ENCODE measurements at regions of chr18 and their contacts with region 1.

Region 1: GRCh38 chr18:55415258-55415871 is 172.6 kb downstream of the TCF4 start:
- DNase-seq: peak; percentile 80
- H3K4me3 Mint-ChIP-seq: no peak overlapping the region
- H3K27ac Mint-ChIP-seq: no peak overlapping the region
- H3K4me1 Mint-ChIP-seq: peaks cover 5% of the 10 kb centered on the region
- H3K27me3 Mint-ChIP-seq: no peaks in the 10 kb centered on the region
- CTCF ChIP-seq: peak; percentile 91

Region 2: DNA sequence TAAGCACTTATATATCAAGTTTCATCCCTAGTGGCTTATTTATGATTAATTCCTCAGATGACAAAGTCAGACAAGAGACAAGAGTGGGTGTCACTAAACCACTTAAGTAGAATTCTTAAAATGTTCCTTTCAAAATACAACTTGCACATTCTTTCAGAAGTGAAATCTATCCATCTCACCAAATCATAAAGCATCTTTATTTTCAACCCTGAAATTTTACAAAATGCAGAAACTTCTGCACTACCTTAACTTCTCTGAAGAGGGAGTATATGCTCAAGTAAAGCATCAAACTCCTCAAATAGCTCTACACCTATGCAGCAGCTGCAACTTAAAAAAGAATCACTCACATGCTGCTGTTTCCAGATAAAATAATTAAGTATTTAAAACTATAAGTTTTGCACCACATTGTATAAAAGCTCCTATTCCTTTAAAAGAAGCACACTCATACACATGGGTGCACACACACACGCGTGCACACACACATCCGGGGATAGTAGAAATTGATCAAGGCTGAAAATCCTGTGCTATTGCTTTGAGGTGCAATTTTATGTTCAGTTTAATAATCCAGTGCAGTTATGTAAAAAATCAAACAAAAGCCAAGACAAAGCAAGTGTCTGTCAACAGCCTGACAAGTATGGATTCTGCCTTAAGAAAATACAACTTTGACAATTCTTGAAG is 71.8 kb before region 1 on chr18:
- CTCF ChIA-PET with region 1: interaction called, 3 read pairs
- POLR2A ChIA-PET with region 1: no interaction called
- intact Hi-C with region 1: loop called (anchors 5 kb)
- DNase-seq: peak; percentile 25
- H3K4me3 Mint-ChIP-seq: no peak overlapping the region
- H3K27ac Mint-ChIP-seq: no peak overlapping the region
- H3K4me1 Mint-ChIP-seq: no peaks in the 10 kb centered on the region
- H3K27me3 Mint-ChIP-seq: no peaks in the 10 kb centered on the region
- CTCF ChIP-seq: peak; percentile 57

Region 3: GRCh38 chr18:55425698-55426097 is 10.3 kb after region 1 on chr18:
- CTCF ChIA-PET with region 1: interaction called, 12 read pairs
- POLR2A ChIA-PET with region 1: interaction called, 3 read pairs
- intact Hi-C with region 1: no loop called
- DNase-seq: no peak
- H3K4me3 Mint-ChIP-seq: no peak overlapping the region
- H3K27ac Mint-ChIP-seq: no peak overlapping the region
- H3K4me1 Mint-ChIP-seq: no peaks in the 10 kb centered on the region
- H3K27me3 Mint-ChIP-seq: no peaks in the 10 kb centered on the region
- CTCF ChIP-seq: no peak

Region 4: GRCh38 chr18:55489034-55489986 is 73.9 kb after region 1 on chr18:
- CTCF ChIA-PET with region 1: no interaction called
- POLR2A ChIA-PET with region 1: no interaction called
- intact Hi-C with region 1: no loop called
- DNase-seq: no peak
- H3K4me3 Mint-ChIP-seq: no peak overlapping the region
- H3K27ac Mint-ChIP-seq: no peak overlapping the region
- H3K4me1 Mint-ChIP-seq: peaks cover 6% of the 10 kb centered on the region
- H3K27me3 Mint-ChIP-seq: no peaks in the 10 kb centered on the region
- CTCF ChIP-seq: no peak

Region 5: GRCh38 chr18:55589625-55590291 is 174.4 kb after region 1 on chr18:
- CTCF ChIA-PET with region 1: no interaction called
- POLR2A ChIA-PET with region 1: interaction called, 3 read pairs
- intact Hi-C with region 1: loop called (anchors 2 kb)
- DNase-seq: peak; percentile 94
- H3K4me3 Mint-ChIP-seq: peak overlapping the region; percentile 88
- H3K27ac Mint-ChIP-seq: peak overlapping the region; percentile 96
- H3K4me1 Mint-ChIP-seq: peaks cover 17% of the 10 kb centered on the region
- H3K27me3 Mint-ChIP-seq: no peaks in the 10 kb centered on the region
- CTCF ChIP-seq: no peak

Region 6: DNA sequence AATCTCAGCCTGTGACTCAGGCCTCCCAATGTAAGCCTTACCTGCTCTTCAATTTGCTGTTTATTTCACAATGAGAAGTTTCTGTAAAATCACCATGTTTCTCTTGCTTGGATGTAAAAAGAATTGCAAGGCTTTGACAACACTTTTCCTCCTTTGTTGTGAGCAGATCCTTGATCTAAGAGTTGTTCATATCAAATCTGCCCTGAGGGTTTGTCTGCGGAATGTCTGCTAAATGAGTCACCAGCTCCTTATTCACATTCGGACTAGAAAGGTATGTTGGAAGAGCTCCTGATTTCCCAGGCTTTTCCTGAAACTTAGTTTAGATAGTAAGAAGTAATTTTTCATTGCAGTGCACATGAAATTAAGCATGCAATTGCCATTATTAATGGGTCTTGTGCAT is 440.9 kb after region 1 on chr18:
- CTCF ChIA-PET with region 1: interaction called, 14 read pairs
- POLR2A ChIA-PET with region 1: no interaction called
- intact Hi-C with region 1: loop called (anchors 1 kb)
- DNase-seq: peak; percentile 97
- H3K4me3 Mint-ChIP-seq: no peak overlapping the region
- H3K27ac Mint-ChIP-seq: peak overlapping the region; percentile 64
- H3K4me1 Mint-ChIP-seq: peaks cover 35% of the 10 kb centered on the region
- H3K27me3 Mint-ChIP-seq: no peaks in the 10 kb centered on the region
- CTCF ChIP-seq: no peak

Region 7: GRCh38 chr18:56314396-56314795 is 899.0 kb after region 1 on chr18:
- CTCF ChIA-PET with region 1: no interaction called
- POLR2A ChIA-PET with region 1: no interaction called
- intact Hi-C with region 1: loop called (anchors 10 kb)
- DNase-seq: peak; percentile 9
- H3K4me3 Mint-ChIP-seq: no peak overlapping the region
- H3K27ac Mint-ChIP-seq: no peak overlapping the region
- H3K4me1 Mint-ChIP-seq: peaks cover 11% of the 10 kb centered on the region
- H3K27me3 Mint-ChIP-seq: no peaks in the 10 kb centered on the region
- CTCF ChIP-seq: no peak